Activated T-helper 1 cell treated with anti-CD3 and anti-CD28 coated beads, Interleukin-12 subunit alpha, Interleukin-12 subunit beta, Interleukin-2, Interleukin-4 antibody, amounts not matched to agents 30 ng/mL and 10 ng/mL and 1 ng/mL, durations not matched to agents 14 hours and 24 hours and 36 hours (primary cell): ENCODE measurements at regions of chr1 and their contacts with region 1.

Region 1: GRCh38 chr1:43454266-43455011 is 708 bp upstream of the HYI start:
- DNase-seq: peak; percentile 61
- H3K4me3 Mint-ChIP-seq: peak overlapping the region; percentile 84
- H3K27ac Mint-ChIP-seq: peak overlapping the region; percentile 79
- H3K4me1 Mint-ChIP-seq: peaks cover 18% of the 10 kb centered on the region
- H3K27me3 Mint-ChIP-seq: peaks cover 28% of the 10 kb centered on the region

Region 2: DNA sequence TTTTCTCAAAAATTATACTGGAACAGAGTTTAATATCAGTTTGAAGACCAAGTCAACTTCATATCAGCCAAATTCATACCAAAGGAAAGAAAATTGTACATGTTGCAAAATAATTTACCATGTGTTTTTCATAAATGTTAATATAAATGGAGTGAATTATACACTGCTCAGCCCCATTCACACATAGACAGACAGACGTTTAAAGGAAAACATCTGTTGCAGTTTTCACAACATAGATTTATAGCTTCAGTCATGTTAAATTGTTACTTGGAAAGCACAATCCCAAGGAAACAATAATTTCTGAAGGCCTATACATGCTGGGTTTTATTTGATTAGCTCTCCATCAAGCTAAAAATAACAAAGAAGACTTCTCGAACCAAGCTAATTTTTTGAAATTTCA is 27.1 kb after region 1 on chr1:
- intact Hi-C with region 1: no loop called
- DNase-seq: no peak
- H3K4me3 Mint-ChIP-seq: no peak overlapping the region
- H3K27ac Mint-ChIP-seq: no peak overlapping the region
- H3K4me1 Mint-ChIP-seq: peaks cover 6% of the 10 kb centered on the region
- H3K27me3 Mint-ChIP-seq: peaks cover 13% of the 10 kb centered on the region

Region 3: DNA sequence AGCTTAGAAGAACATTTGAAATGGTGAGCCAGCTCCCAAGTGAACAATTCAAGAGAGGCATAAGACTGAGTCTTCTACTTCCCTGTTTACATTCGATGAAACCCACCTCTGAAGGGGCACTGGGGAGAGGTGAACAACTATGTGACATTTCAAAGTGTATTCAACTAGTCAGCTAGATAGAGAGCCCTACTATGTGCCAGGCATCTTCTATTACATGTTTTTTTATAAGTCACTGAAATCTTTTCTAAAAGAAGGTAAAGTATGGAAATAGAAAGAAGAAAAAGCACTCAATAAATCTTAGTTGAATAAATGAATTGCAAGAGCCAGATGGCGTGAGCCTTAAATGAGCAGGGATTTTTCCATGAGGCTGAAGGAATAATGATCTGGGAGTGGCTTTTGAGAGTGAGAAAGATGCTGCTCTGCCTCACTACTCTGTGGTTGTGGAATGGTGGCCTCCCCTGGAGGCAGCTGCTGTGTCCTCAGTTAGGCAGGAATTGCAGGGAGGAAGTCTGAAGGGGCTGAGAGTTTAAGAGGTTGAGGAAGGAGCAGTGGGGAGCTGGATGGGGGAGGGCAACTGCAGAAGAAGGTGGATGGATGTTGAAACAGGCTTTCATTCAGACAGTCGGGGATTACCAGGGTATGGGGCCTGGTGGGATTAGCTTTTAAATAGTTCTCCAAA is 65.8 kb after region 1 on chr1:
- intact Hi-C with region 1: no loop called
- DNase-seq: no peak
- H3K4me3 Mint-ChIP-seq: no peak overlapping the region
- H3K27ac Mint-ChIP-seq: no peak overlapping the region
- H3K4me1 Mint-ChIP-seq: no peaks in the 10 kb centered on the region
- H3K27me3 Mint-ChIP-seq: peaks cover 21% of the 10 kb centered on the region

Region 4: DNA sequence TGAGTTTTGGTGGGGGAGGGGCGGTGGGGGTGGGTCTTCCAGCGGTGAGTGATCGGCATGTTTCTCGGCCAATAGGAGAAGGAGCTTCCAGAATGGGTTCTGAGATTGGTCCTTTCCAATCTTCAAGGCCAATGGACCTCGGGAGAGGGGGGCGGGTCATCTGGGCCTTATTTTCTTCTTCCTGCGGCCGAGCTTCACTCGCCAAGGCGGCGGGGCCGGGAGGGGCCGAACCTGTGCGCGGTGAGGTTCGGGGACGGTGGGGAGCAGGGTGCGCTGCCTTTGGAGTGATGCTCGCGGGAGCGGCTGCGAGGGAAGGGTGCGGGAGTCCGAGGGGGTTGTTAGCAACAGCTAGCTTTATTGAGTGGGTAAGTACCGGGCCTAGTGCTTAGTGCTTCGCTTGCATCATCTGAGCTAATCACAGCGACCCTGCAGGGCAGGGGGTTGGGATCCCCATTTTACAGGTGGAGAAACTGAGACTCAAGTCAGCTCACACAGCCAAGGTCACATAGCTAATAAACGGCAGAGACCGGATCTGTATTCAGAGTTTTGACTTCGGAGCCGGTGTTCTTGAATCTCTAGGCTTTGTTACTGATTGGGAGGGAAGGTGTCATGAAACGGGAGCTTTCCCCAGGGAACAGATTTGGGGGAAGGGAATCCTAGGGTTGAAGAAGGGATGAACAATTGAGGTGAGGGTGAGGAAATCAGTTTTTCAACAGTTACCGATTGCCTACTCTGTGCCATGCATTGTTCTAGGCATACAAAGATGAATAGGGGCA is 196.1 kb after region 1 on chr1:
- intact Hi-C with region 1: loop called (anchors 5 kb)
- DNase-seq: peak; percentile 89
- H3K4me3 Mint-ChIP-seq: peak overlapping the region; percentile 98
- H3K27ac Mint-ChIP-seq: peak overlapping the region; percentile 98
- H3K4me1 Mint-ChIP-seq: peaks cover 27% of the 10 kb centered on the region
- H3K27me3 Mint-ChIP-seq: peaks cover under 1% of the 10 kb centered on the region